Activated CD4-positive, alpha-beta memory T cell treated with anti-CD3 and anti-CD28 coated beads for 36 hours (primary cell): ENCODE measurements at regions of chr12 and their contacts with region 1.

Region 1: DNA sequence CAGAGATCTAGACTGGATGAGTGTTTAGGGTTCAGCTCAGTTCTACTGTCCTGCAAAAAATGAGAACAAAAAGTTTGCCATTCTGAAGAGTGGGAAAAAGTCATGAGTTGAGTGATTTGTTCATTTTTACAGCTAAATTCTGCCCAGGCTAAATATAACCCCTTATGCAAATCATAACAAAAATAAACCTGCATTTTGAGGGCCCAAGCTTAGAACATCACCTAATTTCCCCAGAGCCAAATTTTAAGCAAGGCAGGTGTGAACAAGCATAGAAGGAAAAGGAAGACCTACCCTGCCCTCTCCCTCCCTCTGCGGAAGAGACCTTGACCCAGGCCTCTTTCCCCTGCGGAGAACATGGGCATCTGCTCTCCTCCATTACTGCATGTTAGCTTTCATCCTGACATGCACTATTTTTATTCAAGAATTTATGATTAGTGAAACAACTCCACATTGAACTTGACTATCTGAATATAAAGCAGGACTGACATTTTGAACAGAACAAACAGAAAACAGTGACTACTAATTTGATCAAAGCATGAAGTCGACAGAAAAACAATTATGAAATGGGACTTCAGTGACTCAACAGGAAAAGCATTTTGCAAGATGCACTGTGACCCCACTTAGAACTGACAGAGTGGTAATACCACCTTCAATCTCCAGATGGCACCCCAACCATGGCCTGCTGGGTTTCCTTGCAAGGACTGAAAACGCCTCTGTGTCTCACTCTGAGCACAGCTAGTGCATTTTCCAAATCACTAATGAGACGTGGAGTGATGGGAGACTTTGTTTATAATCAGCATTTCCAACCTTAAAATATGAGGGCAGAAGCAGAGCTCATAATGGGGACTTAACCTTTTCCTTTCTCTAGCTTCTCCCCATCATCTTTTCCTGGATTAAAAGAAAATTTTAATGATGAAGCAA is 30.9 kb upstream of the SELPLG start:
- DNase-seq: peak; percentile 92
- H3K4me3 Mint-ChIP-seq: peak overlapping the region; percentile 33
- H3K27ac Mint-ChIP-seq: peak overlapping the region; percentile 83
- H3K4me1 Mint-ChIP-seq: peaks cover 23% of the 10 kb centered on the region
- H3K27me3 Mint-ChIP-seq: no peaks in the 10 kb centered on the region

Region 2: GRCh38 chr12:108482717-108483212 is 181.8 kb before region 1 on chr12:
- CTCF ChIA-PET with region 1: no interaction called
- POLR2A ChIA-PET with region 1: no interaction called
- intact Hi-C with region 1: no loop called
- DNase-seq: no peak
- H3K4me3 Mint-ChIP-seq: no peak overlapping the region
- H3K27ac Mint-ChIP-seq: no peak overlapping the region
- H3K4me1 Mint-ChIP-seq: no peaks in the 10 kb centered on the region
- H3K27me3 Mint-ChIP-seq: peaks cover 29% of the 10 kb centered on the region

Region 3: GRCh38 chr12:108562348-108563135 is 102.1 kb before region 1 on chr12 and contains the start of gene ISCU:
- CTCF ChIA-PET with region 1: interaction called, 29 read pairs
- POLR2A ChIA-PET with region 1: no interaction called
- intact Hi-C with region 1: loop called (anchors 1 kb)
- DNase-seq: peak; percentile 99
- H3K4me3 Mint-ChIP-seq: peak within 1 kb of the TSS; percentile 100
- H3K27ac Mint-ChIP-seq: peak within 1 kb of the TSS; percentile 99
- H3K4me1 Mint-ChIP-seq: peaks cover 57% of the 10 kb centered on the region
- H3K27me3 Mint-ChIP-seq: no peaks in the 10 kb centered on the region
- total RNA-seq, gene ISCU: 88.6 to 94.3 TPM

Region 4: GRCh38 chr12:108589028-108589839 is 75.4 kb before region 1 on chr12:
- CTCF ChIA-PET with region 1: no interaction called
- POLR2A ChIA-PET with region 1: no interaction called
- intact Hi-C with region 1: no loop called
- DNase-seq: no peak
- H3K4me3 Mint-ChIP-seq: no peak overlapping the region
- H3K27ac Mint-ChIP-seq: no peak overlapping the region
- H3K4me1 Mint-ChIP-seq: no peaks in the 10 kb centered on the region
- H3K27me3 Mint-ChIP-seq: peaks cover 3% of the 10 kb centered on the region

Region 5: DNA sequence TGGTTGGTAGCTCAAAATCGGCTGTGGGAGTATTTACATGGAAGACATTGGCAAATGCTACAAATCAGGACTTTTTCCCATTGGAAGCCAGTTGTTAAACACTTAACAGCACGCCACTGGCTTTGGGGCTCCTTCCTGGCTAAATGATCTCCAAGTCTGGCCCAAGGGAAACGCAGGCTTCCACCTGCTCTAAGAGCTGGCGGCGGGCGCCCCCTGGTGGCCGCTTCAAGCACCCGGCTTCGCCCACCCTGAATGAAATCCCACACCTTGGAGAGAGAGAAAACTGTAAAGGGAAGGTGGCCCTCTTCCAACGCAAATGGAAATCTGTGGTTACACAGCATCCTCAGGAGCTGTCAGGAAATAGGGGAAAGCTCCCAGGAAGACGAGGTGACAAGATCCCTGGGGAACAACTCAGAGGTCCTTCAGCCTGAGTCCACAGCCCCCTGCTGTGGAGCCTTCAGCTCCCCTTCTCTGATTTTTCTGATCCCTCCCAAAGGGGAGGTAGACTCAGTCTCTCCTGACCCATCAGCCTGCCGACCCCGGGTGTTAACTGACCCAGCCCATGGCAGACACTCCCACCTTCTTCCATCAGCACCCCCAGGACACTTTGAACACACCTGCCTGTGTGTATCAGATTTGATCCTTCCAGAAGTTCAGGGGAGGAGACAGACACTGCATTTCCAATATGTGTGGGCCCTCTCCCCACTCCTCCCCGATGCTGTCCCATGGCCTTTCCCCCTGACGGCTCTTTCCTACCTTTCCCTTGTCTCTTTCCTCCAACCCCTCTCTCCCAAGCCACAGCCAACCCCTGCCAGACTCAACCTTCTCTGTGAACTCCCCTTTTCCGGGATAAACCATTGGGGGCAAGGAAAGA is 46.3 kb before region 1 on chr12:
- CTCF ChIA-PET with region 1: interaction called, 19 read pairs
- POLR2A ChIA-PET with region 1: no interaction called
- intact Hi-C with region 1: loop called (anchors 2 kb)
- DNase-seq: peak; percentile 84
- H3K4me3 Mint-ChIP-seq: no peak overlapping the region
- H3K27ac Mint-ChIP-seq: peak overlapping the region; percentile 25
- H3K4me1 Mint-ChIP-seq: peaks cover 54% of the 10 kb centered on the region
- H3K27me3 Mint-ChIP-seq: no peaks in the 10 kb centered on the region

Region 6: GRCh38 chr12:108691175-108691997 is 26.8 kb after region 1 on chr12:
- CTCF ChIA-PET with region 1: interaction called, 71 read pairs
- POLR2A ChIA-PET with region 1: interaction called, 6 read pairs
- intact Hi-C with region 1: loop called (anchors 1 kb)
- DNase-seq: peak; percentile 91
- H3K4me3 Mint-ChIP-seq: peak overlapping the region; percentile 56
- H3K27ac Mint-ChIP-seq: peak overlapping the region; percentile 94
- H3K4me1 Mint-ChIP-seq: peaks cover 70% of the 10 kb centered on the region
- H3K27me3 Mint-ChIP-seq: no peaks in the 10 kb centered on the region

Region 7: GRCh38 chr12:108722992-108723766 is 58.6 kb after region 1 on chr12:
- CTCF ChIA-PET with region 1: interaction called, 13 read pairs
- POLR2A ChIA-PET with region 1: interaction called, 4 read pairs
- intact Hi-C with region 1: no loop called
- DNase-seq: no peak
- H3K4me3 Mint-ChIP-seq: no peak overlapping the region
- H3K27ac Mint-ChIP-seq: no peak overlapping the region
- H3K4me1 Mint-ChIP-seq: peaks cover 32% of the 10 kb centered on the region
- H3K27me3 Mint-ChIP-seq: no peaks in the 10 kb centered on the region

Region 8: GRCh38 chr12:108768591-108769500 is 104.2 kb after region 1 on chr12:
- CTCF ChIA-PET with region 1: interaction called, 10 read pairs
- POLR2A ChIA-PET with region 1: no interaction called
- intact Hi-C with region 1: no loop called
- DNase-seq: peak; percentile 23
- H3K4me3 Mint-ChIP-seq: no peak overlapping the region
- H3K27ac Mint-ChIP-seq: no peak overlapping the region
- H3K4me1 Mint-ChIP-seq: peaks cover 2% of the 10 kb centered on the region
- H3K27me3 Mint-ChIP-seq: peaks cover 4% of the 10 kb centered on the region